Activated B cell treated with CpG ODN at 0.5 μM for 24 hours (primary cell): ENCODE measurements at regions of chr20 and their contacts with region 1.

Region 1: GRCh38 chr20:36808317-36809257 is 35.0 kb upstream of the DSN1 start:
- DNase-seq: peak; percentile 62
- ATAC-seq: peak; percentile 71
- H3K4me3 Mint-ChIP-seq: no peak overlapping the region
- H3K27ac Mint-ChIP-seq: peak overlapping the region; percentile 35
- H3K4me1 Mint-ChIP-seq: peaks cover 3% of the 10 kb centered on the region
- H3K27me3 Mint-ChIP-seq: no peaks in the 10 kb centered on the region
- CTCF ChIP-seq: peak; percentile 71

Region 2: GRCh38 chr20:36847009-36847709 is 38.6 kb after region 1 on chr20:
- CTCF ChIA-PET with region 1: interaction called, 21 read pairs
- POLR2A ChIA-PET with region 1: interaction called, 4 read pairs
- intact Hi-C with region 1: loop called (anchors 5 kb)
- DNase-seq: no peak
- ATAC-seq: no peak
- H3K4me3 Mint-ChIP-seq: peak overlapping the region; percentile 74
- H3K27ac Mint-ChIP-seq: peak overlapping the region; percentile 95
- H3K4me1 Mint-ChIP-seq: peaks cover 91% of the 10 kb centered on the region
- H3K27me3 Mint-ChIP-seq: no peaks in the 10 kb centered on the region
- CTCF ChIP-seq: no peak